ENCODE measurements at regions of chr17 and their contacts with region 1.

Region 1: GRCh38 chr17:46940621-46941404 is 17.9 kb downstream of the GOSR2 start:
- DNase-seq: peak; percentile 78
- H3K4me3 ChIP-seq: no peak overlapping the region
- H3K27ac ChIP-seq: no peak overlapping the region
- H3K4me1 ChIP-seq: peaks cover 11% of the 10 kb centered on the region
- H3K27me3 ChIP-seq: no peaks in the 10 kb centered on the region
- CTCF ChIP-seq: peak; percentile 90 to 95
- POLR2A ChIP-seq: peak; percentile 40

Region 2: GRCh38 chr17:46046957-46047356 is 893.9 kb before region 1 on chr17:
- CTCF ChIA-PET with region 1: no interaction called
- POLR2A ChIA-PET with region 1: no interaction called
- dilution Hi-C with region 1: no loop called
- intact Hi-C with region 1: no loop called
- DNase-seq: peak; percentile 72
- H3K4me3 ChIP-seq: no peak overlapping the region
- H3K27ac ChIP-seq: no peak overlapping the region
- H3K4me1 ChIP-seq: peaks cover 9% of the 10 kb centered on the region
- H3K27me3 ChIP-seq: no peaks in the 10 kb centered on the region
- CTCF ChIP-seq: no peak
- POLR2A ChIP-seq: no peak

Region 3: DNA sequence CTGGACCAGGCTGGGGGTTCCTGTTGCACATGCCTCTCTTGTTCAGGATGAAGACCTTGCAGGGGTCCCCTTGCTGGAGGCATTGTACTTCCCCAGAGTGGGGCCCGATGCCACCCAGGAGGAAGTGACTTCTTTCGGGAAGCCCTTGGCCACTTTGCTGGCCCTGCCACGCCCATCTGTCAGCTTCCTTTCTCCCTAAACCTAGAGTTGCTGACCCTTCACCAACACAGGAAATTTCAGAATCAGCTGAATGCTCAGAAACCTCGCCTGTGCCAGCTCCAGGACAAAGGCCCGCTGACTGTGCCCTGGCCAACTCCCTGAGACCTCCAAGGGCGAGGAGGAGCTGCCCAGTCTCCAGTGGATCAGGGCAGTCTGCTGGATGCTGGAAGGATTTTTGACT is 62.8 kb before region 1 on chr17:
- CTCF ChIA-PET with region 1: interaction called, 12 read pairs
- POLR2A ChIA-PET with region 1: no interaction called
- dilution Hi-C with region 1: no loop called
- intact Hi-C with region 1: no loop called
- DNase-seq: no peak
- H3K4me3 ChIP-seq: no peak overlapping the region
- H3K27ac ChIP-seq: no peak overlapping the region
- H3K4me1 ChIP-seq: no peaks in the 10 kb centered on the region
- H3K27me3 ChIP-seq: no peaks in the 10 kb centered on the region
- CTCF ChIP-seq: no peak
- POLR2A ChIP-seq: no peak

Region 4: GRCh38 chr17:46929413-46929812 is 11.4 kb before region 1 on chr17:
- CTCF ChIA-PET with region 1: interaction called, 36 read pairs
- POLR2A ChIA-PET with region 1: no interaction called
- dilution Hi-C with region 1: no loop called
- intact Hi-C with region 1: no loop called
- DNase-seq: peak; percentile 77
- H3K4me3 ChIP-seq: no peak overlapping the region
- H3K27ac ChIP-seq: peak overlapping the region; percentile 77
- H3K4me1 ChIP-seq: peaks cover 37% of the 10 kb centered on the region
- H3K27me3 ChIP-seq: no peaks in the 10 kb centered on the region
- CTCF ChIP-seq: no peak
- POLR2A ChIP-seq: peak; percentile 17

Region 5: GRCh38 chr17:46995841-46996571 is 55.2 kb after region 1 on chr17:
- CTCF ChIA-PET with region 1: interaction called, 80 read pairs
- POLR2A ChIA-PET with region 1: no interaction called
- dilution Hi-C with region 1: no loop called
- intact Hi-C with region 1: loop called (anchors 1 kb)
- DNase-seq: peak; percentile 65
- H3K4me3 ChIP-seq: no peak overlapping the region
- H3K27ac ChIP-seq: peak overlapping the region; percentile 9
- H3K4me1 ChIP-seq: peaks cover 8% of the 10 kb centered on the region
- H3K27me3 ChIP-seq: no peaks in the 10 kb centered on the region
- CTCF ChIP-seq: no peak
- POLR2A ChIP-seq: no peak

Region 6: DNA sequence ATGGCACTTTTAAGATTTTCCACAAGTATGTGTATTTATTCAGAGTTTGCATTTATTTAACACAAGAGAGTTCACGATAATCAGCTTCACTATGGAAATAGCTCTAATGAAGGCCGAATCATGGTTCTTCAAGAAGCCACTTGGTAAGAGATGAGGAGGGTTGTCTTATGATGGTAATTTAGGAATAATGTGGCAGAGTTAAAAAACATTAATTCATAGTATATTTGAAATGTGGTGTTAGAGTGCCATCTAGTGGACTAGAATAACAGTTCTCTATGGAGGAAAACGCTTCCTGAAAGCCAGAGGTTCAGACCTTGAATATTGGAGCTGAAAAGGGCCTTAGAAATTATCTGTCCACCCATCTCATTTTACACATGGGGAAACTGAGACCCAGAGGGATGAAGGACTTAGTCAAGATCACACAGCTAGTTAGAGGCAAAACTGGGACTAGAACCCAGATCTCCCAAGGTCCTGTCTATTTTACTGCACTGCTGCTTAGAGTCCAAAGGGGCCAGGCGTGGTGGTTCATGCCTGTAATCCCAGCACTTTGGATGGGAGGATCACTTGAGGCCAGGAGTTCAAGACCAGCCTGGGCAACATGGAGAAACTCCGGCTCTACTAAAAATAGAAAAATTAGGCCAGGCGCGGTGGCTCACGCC is 675.1 kb after region 1 on chr17:
- CTCF ChIA-PET with region 1: interaction called, 15 read pairs
- POLR2A ChIA-PET with region 1: no interaction called
- dilution Hi-C with region 1: no loop called
- intact Hi-C with region 1: no loop called
- DNase-seq: peak; percentile 61
- H3K4me3 ChIP-seq: no peak overlapping the region
- H3K27ac ChIP-seq: no peak overlapping the region
- H3K4me1 ChIP-seq: no peaks in the 10 kb centered on the region
- H3K27me3 ChIP-seq: no peaks in the 10 kb centered on the region
- CTCF ChIP-seq: peak; percentile 38 to 40
- POLR2A ChIP-seq: no peak

Measured in endothelial cell of umbilical vein (primary cell).